Left cardiac atrium (tissue), 4 donors: ENCODE measurements at regions of chr12 and their contacts with region 1.

Region 1: DNA sequence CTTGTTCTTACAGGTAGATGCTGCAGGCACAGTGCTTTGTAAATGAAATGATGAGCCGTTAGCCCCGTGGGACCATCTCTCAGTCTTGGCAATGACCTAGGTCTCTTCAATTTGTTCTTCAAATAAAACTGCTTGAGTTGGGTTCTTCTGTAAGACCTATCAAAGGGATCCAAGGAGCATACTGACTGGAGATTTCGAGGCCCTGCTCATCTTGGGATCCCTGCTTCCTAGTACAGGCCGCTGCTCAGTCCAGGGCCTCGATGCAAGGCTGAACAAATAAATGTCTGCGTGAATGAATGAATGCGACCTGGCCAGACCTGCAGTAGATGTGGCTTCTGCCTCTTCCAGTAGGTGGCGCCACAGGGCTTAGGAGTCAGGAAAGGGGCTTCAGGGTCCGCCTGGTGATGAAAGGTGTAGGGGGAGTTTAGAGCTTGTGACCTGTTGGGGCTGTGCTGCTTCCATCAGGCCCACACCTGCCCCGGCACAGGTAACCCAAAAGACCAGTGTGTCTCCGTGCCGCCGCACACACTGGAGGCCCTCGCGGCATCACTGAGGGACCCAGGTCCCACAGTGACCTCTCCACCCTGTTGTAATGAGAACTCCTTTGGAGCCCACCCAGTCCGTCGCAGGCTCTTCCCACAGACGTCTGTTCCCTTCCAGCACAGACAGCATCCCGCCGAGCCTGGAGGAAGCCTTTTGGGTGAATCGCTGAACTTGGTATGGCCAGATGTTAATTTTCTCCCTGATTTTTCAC is 4.4 kb downstream of the CACNA1C start:
- DNase-seq: peak; percentile 74
- ATAC-seq: peak in 1 of 2 donors; percentile 36

Region 2: DNA sequence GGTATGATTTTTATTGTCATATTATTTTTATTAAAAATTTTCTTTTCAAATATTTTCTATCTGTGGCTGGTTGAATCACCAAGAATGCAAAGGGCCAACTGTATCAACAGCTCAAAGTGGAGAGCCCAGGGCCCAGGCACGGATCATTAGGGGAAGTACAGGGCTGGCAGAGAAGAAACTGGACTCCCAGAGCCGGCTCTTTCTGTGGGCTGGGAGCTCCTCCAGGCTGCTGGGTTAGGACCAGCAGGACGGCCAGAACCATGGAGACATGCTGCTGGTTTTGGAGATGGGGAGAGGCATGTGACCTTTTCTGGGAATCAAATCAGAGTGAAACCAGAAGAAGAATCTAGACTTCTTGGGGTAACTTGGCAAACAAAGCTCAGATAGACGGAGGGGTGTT is 216.1 kb after region 1 on chr12:
- intact Hi-C with region 1: loop called in 1 of 2 experiments (anchors 10 kb)
- DNase-seq: peak; percentile 51
- ATAC-seq: peak; percentile 56 to 85

Region 3: DNA sequence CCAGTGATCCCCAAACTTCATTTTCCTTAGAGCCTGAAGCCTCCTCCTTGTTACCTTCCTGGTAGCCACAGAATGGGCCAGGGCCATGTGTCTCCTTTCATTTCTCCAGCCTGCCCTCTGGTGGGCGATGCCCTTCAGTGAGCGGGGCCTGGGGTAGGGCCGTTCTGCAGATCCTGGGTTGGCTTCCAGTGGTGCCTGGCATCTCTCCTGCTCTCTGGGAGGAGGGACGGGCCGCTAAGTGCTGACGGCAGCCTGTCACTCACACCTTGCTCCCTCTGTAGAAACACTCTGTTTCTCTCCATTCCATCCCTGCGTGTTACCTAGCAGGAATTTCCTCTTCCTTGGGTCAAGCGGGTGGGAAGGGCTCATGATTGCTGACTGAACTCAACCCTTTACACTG is 227.6 kb after region 1 on chr12:
- intact Hi-C with region 1: loop called in 1 of 2 experiments (anchors 10 kb)
- DNase-seq: peak; percentile 81
- ATAC-seq: peak; percentile 79 to 89